ENCODE measurements at regions of chr6 and their contacts with region 1.

Region 1: DNA sequence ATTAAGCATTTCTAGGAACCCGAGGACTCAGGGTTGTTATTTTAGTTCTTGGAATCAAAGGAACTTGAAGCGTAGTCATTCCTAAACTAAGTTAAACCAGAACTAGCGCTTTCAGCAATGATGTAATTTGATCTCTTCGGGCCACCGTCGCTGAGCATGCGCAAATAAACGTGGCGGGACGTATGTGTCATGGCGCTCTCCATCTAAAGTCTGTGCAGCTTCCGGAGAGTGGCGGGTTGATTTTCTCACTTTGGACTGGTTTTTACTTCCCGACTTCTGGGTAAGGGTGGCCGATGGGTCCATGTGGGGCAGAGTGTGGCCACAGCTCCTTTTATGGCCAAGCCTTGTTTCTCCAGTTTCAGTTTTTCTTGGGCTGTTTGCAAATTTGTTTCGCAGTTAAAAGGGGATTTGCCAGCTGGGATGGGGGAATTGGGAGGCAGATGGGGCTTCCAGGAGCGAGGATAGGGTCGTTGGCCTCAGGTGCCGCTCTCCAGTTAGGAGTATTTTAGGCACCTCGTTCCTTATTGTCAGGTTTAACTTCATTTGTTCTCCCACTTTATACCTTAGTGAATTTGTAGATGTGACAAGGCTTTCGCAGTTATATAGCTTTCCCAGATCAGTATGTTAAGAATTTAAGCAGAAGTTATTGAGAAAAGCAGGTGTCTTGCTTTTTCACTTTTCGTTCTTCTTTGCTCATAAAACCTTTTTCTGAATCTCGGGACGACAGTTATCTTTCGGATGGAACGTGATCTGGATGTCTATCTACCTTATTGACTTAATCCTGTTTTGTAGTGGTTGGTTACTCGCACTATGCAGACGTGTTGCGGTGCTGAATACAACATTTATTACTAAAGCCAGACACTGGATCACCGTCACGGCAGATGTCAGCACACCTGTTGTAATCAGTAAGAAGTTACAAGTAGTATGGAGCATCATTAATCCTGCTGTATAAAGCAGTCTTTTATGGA is at the start of gene CDKAL1:
- DNase-seq: peak; percentile 80 to 95 (median 90)
- H3K4me3 ChIP-seq: peak within 1 kb of the TSS; percentile 53 to 99 (median 85)
- H3K27ac ChIP-seq: peak within 1 kb of the TSS in 54 of 59 donors; percentile 12 to 92 (median 77)
- H3K27me3 ChIP-seq: peaks cover 0 to 3% (median 0%) of the 10 kb centered on the region in 45 donors
- CTCF ChIP-seq: peak in 45 of 56 donors; percentile 14 to 68 (median 38)
- total RNA-seq, gene CDKAL1: 11.4 to 19.5 (median 15.0) TPM

Region 2: DNA sequence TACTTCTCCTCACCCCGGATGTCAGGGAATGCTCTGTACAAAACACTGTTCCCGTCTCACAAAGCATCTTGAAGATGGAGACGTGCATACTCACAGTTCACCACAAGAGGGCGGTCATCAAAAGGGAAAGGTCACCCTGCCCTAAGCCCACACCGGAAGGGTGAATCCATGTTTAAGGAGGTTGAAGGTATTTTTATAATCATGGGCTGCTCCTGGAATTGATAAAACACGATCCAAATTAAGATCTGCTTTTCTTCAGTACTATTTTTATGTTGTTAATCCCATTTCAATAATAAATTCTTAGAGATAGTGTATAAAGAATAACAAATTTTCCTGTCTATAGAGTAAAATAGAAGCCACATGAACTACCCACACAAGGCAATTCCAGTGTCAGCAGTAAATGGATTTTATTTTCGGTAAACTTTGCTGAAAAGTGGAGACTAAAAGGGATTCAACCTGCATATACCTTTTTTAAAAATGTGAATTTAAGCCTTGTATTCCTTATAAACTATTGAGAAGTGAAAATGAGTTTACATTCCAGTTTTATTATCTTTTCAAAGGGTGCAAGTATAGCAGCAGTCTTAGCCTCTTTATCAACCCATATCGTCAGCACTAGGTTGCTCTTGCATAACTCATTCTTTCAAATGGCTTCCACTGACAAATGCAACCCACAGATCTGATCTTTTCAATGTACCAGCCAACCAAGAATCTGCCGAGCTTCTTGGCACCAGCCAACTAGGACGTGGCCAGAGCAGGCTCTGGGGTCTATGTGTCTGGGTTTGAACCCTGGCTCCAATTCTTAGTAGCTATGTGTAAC is 242.6 kb before region 1 on chr6:
- intact Hi-C with region 1: loop called (anchors 2 to 5 kb)
- DNase-seq: peak in 9 of 10 donors; percentile 34 to 84 (median 69)
- H3K4me3 ChIP-seq: peak overlapping the region in 6 of 59 donors; percentile 1 to 12 (median 6)
- H3K27ac ChIP-seq: no peak overlapping the region
- H3K27me3 ChIP-seq: no peaks in the 10 kb centered on the region
- CTCF ChIP-seq: peak; percentile 83 to 98 (median 95)

Region 3: DNA sequence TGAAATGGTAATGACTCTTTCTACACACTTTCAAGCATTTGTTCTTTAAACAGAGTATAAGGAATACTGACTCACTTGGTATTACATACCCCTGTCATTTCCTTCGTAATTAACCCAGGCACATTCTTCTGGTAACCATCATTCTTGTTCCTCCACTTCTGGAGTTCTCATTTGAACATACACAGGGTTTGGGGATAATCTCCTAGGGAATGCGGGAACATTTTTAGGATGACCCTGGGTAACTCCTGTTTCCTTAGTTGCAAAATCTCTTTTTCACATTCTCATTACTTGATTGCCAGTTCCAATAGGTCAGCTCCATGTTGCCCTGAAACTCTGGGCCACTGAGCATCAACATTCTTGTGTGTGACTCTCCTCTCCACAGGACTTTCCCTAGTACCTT is 184.4 kb before region 1 on chr6:
- intact Hi-C with region 1: no loop called
- DNase-seq: no peak
- H3K4me3 ChIP-seq: no peak overlapping the region
- H3K27ac ChIP-seq: no peak overlapping the region
- H3K27me3 ChIP-seq: no peaks in the 10 kb centered on the region
- CTCF ChIP-seq: no peak

Region 4: GRCh38 chr6:20900389-20901160 is 366.0 kb after region 1 on chr6:
- intact Hi-C with region 1: no loop called
- DNase-seq: no peak
- H3K4me3 ChIP-seq: no peak overlapping the region
- H3K27ac ChIP-seq: no peak overlapping the region
- H3K27me3 ChIP-seq: no peaks in the 10 kb centered on the region
- CTCF ChIP-seq: no peak

Measured in dorsolateral prefrontal cortex (tissue), 120 donors.